OCI-LY7 (cell line): ENCODE measurements at regions of chr5 and their contacts with region 1.

Region 1: DNA sequence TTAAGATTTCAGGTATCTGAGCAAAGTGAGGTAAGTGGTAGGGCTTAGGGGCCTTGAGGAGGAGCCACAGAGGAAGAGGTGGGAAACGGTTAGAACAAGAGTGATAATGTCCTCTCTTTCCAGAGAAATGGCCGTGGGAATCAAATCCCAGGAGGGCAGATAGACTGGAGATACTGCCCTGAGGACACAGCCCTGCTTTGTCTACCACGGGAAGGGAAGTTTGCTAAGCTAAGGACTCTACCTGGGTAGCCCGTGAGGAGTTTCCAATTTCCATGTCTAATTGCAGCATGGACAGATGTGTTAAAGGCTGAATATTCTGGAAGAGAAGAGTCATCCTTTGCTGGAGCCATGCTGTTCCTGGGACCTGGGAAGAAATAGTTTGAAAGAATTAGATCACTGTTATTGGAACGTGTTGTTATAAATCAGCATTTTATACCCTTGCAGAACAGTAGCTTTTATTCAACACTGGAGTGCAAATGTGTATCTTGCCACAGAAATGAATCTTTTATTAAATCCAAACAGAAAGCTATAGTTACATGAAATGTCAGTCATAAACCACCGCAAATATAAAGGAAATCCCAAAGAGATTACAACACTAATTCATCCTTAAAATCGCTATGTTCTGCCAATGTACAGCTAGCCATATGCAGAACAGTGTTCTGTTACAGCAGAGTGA is 133.2 kb upstream of the LHFPL2 start:
- DNase-seq: no peak
- H3K4me3 ChIP-seq: no peak overlapping the region
- H3K27ac ChIP-seq: no peak overlapping the region
- H3K4me1 ChIP-seq: no peaks in the 10 kb centered on the region
- CTCF ChIP-seq: no peak

Region 2: DNA sequence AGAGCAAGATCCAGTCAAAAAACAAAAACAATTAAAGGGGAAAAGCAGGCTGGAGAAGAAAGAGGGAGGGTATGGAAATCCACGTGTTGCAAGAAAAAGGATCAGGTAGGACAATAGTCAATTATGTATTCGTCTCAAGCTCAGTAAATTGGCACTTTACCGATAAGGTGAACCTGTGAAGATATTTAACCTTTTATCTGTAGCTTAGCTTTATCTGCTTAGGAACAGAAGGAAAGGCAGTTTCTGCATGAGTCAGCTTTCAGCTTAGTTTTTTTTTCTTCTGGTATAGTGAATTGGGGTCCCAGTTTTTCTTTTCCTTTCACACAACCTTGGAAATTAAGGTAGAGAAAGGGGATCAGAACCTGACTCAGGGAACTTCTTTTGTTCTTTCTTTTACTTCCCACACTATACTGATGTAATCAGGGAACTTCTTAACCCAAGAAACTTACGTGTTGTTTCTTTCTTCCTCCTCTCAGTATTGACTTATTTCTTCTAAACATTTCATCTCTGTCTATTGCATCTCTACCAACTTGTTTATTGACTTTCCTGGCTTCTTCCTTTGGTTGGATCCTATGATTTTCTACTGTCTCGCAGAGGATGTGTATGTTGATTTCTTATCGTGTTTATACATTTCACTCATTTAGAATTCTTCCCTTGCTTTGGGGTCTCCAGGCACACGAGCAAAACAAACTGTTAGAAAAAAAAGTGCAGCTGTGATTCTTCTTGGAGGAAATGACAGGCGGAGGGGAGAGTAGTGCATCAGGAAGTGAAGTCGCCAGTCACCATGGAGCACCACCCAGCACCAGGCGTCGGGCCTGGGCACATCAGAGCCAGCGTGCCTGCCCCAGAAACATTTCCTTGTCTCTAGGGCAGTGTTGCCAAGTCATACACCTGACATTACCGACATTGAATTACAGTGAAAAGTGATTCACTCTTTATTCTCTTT is 10.2 kb before region 1 on chr5:
- CTCF ChIA-PET with region 1: interaction called, 3 read pairs
- POLR2A ChIA-PET with region 1: interaction called, 10 read pairs
- intact Hi-C with region 1: no loop called
- DNase-seq: peak; percentile 64
- H3K4me3 ChIP-seq: peak overlapping the region; percentile 3
- H3K27ac ChIP-seq: peak overlapping the region; percentile 46
- H3K4me1 ChIP-seq: peaks cover 53% of the 10 kb centered on the region
- CTCF ChIP-seq: no peak

Region 3: GRCh38 chr5:78792345-78793145 is 10.8 kb after region 1 on chr5:
- CTCF ChIA-PET with region 1: no interaction called
- POLR2A ChIA-PET with region 1: interaction called, 10 read pairs
- intact Hi-C with region 1: no loop called
- DNase-seq: peak; percentile 45
- H3K4me3 ChIP-seq: peak overlapping the region; percentile 33
- H3K27ac ChIP-seq: peak overlapping the region; percentile 39
- H3K4me1 ChIP-seq: peaks cover 55% of the 10 kb centered on the region
- CTCF ChIP-seq: no peak